GM23248 (cell line): ENCODE measurements at regions of chr4 and their contacts with region 1.

Region 1: GRCh38 chr4:182806259-182807252 is 110.6 kb downstream of the DCTD start:
- DNase-seq: peak; percentile 85
- H3K4me3 ChIP-seq: peak overlapping the region; percentile 70
- H3K27ac ChIP-seq: no peak overlapping the region
- H3K4me1 ChIP-seq: no peaks in the 10 kb centered on the region
- H3K27me3 ChIP-seq: peaks cover 8% of the 10 kb centered on the region; the same call in 1 of the 2 replicates

Region 2: DNA sequence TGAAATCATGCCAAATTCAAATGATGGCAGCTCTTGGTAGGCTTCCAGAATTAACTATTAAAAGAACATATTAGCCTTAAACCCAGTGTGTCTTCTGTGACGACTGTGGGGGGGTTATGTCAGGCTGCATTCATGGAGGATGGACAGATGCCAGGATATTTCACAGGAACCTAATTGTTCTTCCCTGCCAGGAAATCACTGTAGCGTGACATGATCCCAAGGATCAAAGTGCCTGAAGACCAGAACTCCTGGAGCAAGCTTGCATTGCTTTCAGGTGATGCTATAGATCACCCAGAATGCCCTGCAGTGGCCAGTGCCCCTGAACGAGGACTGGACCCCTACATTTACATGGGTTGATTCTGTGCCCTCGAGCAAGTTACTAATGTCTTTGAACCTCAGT is 1656.4 kb before region 1 on chr4:
- in situ Hi-C with region 1: loop called (anchors 25 kb)
- DNase-seq: no peak
- H3K4me3 ChIP-seq: no peak overlapping the region
- H3K27ac ChIP-seq: no peak overlapping the region
- H3K4me1 ChIP-seq: no peaks in the 10 kb centered on the region
- H3K27me3 ChIP-seq: no peaks in the 10 kb centered on the region

Region 3: GRCh38 chr4:182318256-182318655 is 488.3 kb before region 1 on chr4:
- in situ Hi-C with region 1: no loop called
- DNase-seq: no peak
- H3K4me3 ChIP-seq: no peak overlapping the region
- H3K27ac ChIP-seq: no peak overlapping the region
- H3K4me1 ChIP-seq: no peaks in the 10 kb centered on the region
- H3K27me3 ChIP-seq: no peaks in the 10 kb centered on the region

Region 4: DNA sequence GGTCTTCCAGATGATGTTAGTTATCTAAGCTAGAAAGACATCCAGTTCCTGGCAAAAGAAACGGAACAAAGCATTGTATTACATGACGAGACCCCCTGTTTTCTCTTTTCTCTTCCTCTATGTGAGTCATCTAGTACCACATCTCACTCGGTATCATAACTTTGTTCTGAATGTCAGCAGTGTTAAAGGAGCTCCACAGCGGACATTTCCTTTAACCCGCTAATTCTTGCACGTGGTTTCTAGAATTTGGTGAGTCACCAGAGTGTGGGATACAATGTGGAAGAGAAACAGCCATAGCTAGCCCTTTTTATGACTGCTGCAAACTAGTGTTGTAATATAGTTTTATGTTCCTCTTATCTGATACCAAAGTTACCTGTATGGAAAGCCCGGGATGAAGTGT is 319.7 kb before region 1 on chr4:
- in situ Hi-C with region 1: loop called (anchors 10 kb)
- DNase-seq: no peak
- H3K4me3 ChIP-seq: no peak overlapping the region
- H3K27ac ChIP-seq: no peak overlapping the region
- H3K4me1 ChIP-seq: no peaks in the 10 kb centered on the region
- H3K27me3 ChIP-seq: no peaks in the 10 kb centered on the region

Region 5: DNA sequence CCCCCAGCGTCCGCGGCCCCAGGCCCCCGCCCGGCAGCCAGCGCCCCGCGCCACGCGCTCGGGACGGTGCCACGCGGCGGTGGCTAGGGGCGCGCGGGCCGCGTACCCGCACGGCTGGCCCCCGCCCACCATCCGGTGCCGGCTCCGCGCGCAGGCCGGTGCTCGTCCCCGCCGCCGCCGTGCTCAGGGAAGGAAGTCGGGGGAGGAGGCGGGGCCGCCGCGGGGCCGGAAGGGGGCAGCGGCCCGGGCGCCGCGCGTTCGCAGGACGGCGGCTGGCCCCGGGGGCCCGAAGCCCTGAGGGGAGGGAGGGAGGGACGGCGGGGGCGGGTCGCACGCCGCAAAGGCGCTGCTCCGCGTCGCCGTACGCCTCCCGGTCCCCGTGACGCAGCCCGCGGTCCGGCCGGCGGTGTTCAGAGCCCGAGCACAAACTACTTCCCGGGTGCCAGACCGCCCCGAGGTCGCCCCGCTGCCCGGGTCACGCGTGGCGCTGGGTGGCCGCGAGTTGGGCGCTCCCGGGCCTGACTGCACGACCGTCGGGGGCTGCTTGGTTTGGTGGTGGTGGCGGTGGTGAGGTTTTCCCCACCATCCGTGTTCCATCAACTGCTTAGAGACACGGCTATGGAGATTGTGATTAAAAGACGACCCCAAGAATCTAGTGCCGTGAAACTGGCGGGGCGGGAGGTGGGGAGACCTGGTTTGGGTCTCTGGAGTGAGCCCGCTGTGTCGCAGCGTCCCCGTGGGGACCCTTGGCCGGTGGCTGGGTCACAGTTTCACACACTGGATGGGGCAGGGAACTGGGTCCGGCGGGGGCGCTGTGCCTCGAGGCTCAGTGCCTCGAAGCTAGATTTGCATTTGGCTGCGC is 110.9 kb after region 1 on chr4 and contains the start of gene DCTD:
- in situ Hi-C with region 1: no loop called
- DNase-seq: peak; percentile 86
- H3K4me3 ChIP-seq: peak within 1 kb of the TSS; percentile 83
- H3K27ac ChIP-seq: peak within 1 kb of the TSS; percentile 88
- H3K4me1 ChIP-seq: peaks cover 17% of the 10 kb centered on the region
- H3K27me3 ChIP-seq: no peaks in the 10 kb centered on the region
- total RNA-seq, gene DCTD: 133 and 145 TPM in 2 replicates